Activated T-helper 2 cell treated with anti-CD3 and anti-CD28 coated beads, Interferon-gamma antibody, Interleukin-2, Interleukin-4, amounts not matched to agents 10 μg/mL and 5 μg/mL and 100 μg/mL, durations not matched to agents 14 hours and 24 hours and 36 hours (primary cell): ENCODE measurements at regions of chr17 and their contacts with region 1.

Region 1: GRCh38 chr17:30021708-30022317 is 80.4 kb downstream of the EFCAB5 start:
- DNase-seq: no peak
- H3K4me3 Mint-ChIP-seq: no peak overlapping the region
- H3K27ac Mint-ChIP-seq: no peak overlapping the region
- H3K4me1 Mint-ChIP-seq: no peaks in the 10 kb centered on the region
- H3K27me3 Mint-ChIP-seq: peaks cover 6% of the 10 kb centered on the region

Region 2: DNA sequence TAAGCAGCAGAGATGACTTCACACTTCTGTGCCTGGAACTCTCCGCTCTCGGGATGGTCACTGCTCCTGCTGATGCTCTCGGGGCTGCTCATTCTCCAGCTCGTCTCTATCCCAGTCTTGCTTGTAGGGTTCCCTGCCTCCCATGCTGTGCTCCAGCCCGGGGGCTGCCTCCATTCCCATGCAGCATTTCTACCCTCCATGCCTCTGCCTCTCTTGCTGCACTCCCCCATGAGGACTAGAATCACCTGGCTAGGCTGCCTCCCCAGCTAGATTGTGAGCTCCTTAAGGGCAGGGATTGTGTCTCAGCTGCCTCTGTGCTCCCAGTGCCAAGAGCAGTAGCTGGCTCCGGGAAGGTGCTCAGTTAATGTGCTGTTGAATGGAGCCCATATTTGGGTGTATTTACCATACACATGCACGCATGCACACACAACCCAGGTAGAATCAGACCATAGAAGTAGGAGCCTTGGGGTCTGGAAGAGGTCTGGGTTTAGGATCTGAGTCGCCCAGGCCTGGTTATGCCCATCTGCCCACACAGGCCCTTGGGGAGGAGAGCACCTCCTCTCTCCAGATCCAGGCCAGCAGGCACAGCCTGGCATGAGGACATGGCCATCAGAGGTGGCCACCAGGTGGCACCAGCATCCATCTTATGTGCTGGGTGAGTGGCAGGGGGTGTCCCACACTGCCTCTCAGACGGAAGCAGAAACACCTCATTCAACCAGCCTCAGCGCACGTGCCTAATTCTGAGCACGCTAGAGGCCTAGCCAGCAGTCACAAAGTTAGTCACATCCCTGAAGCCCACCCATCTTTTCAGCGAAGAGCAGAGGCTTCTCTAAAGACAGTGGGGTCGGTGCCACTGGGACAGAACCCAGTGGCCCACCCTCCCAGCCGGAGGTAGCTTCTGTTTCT is 441.7 kb before region 1 on chr17:
- intact Hi-C with region 1: loop called (anchors 5 kb)
- DNase-seq: peak; percentile 82
- H3K4me3 Mint-ChIP-seq: no peak overlapping the region
- H3K27ac Mint-ChIP-seq: peak overlapping the region; percentile 84
- H3K4me1 Mint-ChIP-seq: peaks cover 14% of the 10 kb centered on the region
- H3K27me3 Mint-ChIP-seq: no peaks in the 10 kb centered on the region

Region 3: DNA sequence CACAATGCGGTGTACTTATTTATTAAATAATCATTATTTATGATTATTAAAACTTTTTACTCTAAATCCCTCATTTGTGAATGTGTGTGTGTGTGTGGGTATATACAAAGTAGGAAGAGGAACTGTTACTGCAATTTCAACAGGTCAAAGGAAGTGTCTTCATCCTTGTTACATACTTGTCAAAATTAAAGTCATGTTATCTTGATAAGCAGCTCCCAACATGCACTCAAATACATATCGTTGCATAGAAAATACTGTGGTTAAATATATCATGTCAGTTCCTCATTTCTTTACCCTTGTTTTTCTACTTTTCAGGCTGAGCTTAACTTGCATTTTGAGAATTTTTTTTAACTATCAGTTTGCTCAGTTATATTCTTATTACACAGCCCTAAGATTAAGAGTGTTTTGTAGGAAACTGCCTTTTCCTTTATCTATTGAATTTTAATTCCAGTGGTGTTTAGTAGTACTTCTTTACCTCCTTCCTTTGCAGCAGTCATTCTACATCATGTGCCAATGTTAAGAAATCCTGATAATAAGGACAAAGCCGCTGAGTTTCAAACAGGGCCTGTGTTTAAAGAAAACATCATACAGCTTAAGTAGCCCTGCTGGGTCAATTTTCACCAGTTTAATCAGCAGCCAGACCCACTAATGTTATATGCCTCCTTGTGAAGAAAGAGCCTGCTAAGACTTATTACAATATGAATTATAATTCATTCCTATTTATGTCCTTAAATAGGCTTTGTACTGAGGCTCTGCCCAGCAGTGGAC is 73.2 kb before region 1 on chr17:
- intact Hi-C with region 1: no loop called
- DNase-seq: no peak
- H3K4me3 Mint-ChIP-seq: no peak overlapping the region
- H3K27ac Mint-ChIP-seq: no peak overlapping the region
- H3K4me1 Mint-ChIP-seq: no peaks in the 10 kb centered on the region
- H3K27me3 Mint-ChIP-seq: no peaks in the 10 kb centered on the region

Region 4: GRCh38 chr17:30062372-30062771 is 40.6 kb after region 1 on chr17:
- intact Hi-C with region 1: no loop called
- DNase-seq: no peak
- H3K4me3 Mint-ChIP-seq: no peak overlapping the region
- H3K27ac Mint-ChIP-seq: no peak overlapping the region
- H3K4me1 Mint-ChIP-seq: no peaks in the 10 kb centered on the region
- H3K27me3 Mint-ChIP-seq: peaks cover 22% of the 10 kb centered on the region